GM12878 (cell line): ENCODE measurements at regions of chr2 and their contacts with region 1.

Region 1: GRCh38 chr2:7427293-7428060 is 510.3 kb downstream of the RNF144A start:
- DNase-seq: peak; percentile 66
- ATAC-seq: no peak; the same call in 2 of the 3 replicates
- H3K4me3 ChIP-seq: no peak overlapping the region
- H3K27ac ChIP-seq: no peak overlapping the region
- H3K4me1 ChIP-seq: peaks cover 7% of the 10 kb centered on the region; the same call in 1 of the 2 replicates
- H3K27me3 ChIP-seq: peaks cover 0 to 25% of the 10 kb centered on the region in 2 experiments; a peak in 3 of 4 replicates
- CTCF ChIP-seq: peak; percentile 44 to 70 (median 70); a peak in 5 of 6 replicates
- EP300 ChIP-seq: no peak
- POLR2A ChIP-seq: no peak
- RAD21 ChIP-seq: peak; percentile 88

Region 2: DNA sequence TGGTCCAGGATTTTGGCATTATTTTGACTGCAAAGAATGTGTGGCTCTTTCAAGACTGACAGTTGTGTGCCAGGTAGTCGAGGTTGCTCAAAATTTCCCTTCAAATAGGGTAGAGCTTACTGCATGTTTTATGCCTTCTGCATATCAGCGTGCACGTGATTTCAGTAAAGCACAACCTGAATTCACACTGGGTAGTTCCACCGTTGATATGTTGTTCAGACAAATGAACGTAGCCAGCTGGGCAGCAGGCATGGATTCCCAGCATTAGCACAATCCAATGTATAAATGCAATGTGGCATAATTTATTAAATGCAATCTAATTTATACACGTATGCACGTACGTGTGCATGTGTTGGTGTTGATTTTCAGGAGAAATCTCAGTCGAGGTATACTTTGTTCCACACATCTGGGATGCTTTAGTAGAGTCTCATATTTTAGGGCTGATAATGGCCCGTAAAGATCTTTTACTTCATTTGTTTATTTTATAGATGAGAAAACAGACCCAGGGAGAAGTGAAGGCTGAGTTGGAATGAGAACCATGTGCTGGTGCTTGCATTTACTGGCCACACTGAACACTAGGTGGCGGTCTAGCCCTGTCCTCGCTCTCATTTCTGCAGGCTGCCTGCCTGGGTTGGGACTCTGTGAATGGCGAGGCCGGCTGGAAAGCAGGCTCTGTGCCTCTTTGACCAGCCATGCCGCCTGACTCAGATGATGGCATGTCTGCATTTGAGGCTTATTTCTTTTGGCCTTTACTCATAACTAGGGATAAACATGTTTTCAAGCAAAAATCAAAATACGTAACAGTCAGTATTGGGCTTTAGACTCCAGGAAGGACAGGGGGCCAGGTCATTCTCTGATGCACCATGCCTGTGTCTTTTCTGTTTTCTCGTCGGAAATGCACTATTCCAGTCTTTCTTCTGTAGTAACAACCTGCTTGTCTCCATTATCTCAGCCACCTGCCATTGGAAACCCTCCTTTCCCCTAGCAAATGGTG is 389.8 kb before region 1 on chr2:
- CTCF ChIA-PET with region 1: no interaction called
- POLR2A ChIA-PET with region 1: no interaction called
- RAD21 ChIA-PET with region 1: no interaction called
- SMC1A ChIA-PET with region 1: no interaction called
- in situ Hi-C with region 1: no loop called
- intact Hi-C with region 1: no loop called
- DNase-seq: no peak
- ATAC-seq: peak; percentile 99
- H3K4me3 ChIP-seq: no peak overlapping the region
- H3K27ac ChIP-seq: no peak overlapping the region
- H3K4me1 ChIP-seq: no peaks in the 10 kb centered on the region
- H3K27me3 ChIP-seq: no peaks in the 10 kb centered on the region
- CTCF ChIP-seq: peak; percentile 78 to 81 (median 79)
- EP300 ChIP-seq: no peak
- POLR2A ChIP-seq: no peak
- RAD21 ChIP-seq: peak; percentile 64

Region 3: DNA sequence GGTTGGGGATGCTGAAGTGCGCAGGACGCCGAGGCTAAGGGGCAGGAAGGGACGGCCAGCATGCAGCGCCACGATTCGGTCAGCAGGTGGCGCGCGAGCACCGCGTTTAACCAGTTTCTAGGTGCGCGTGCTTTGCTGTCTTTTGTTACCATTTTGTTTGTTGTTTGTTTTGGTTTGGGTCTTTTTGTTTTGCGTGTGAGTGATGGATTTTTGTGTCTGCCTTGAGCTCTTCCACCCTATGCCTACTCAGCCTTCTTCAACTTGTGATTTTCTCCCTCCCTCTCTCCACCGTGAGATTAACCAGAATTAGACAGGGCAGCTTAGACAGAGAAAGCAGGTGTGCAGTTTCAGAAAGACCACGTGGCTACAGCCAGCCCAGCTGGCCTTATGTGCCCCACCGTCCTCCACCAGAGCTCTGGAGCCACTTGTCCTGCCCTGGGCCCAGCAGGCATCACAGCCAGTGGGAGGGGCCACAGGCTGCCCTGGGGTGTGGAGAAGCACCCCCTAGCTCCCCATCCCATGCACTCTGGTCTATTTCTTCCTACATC is 330.1 kb before region 1 on chr2:
- CTCF ChIA-PET with region 1: interaction called, 5 read pairs
- POLR2A ChIA-PET with region 1: no interaction called
- RAD21 ChIA-PET with region 1: interaction called, 6 read pairs
- SMC1A ChIA-PET with region 1: interaction called, 7 read pairs
- in situ Hi-C with region 1: no loop called
- intact Hi-C with region 1: loop called (anchors 2 kb)
- DNase-seq: peak; percentile 35
- ATAC-seq: peak; percentile 98
- H3K4me3 ChIP-seq: peak overlapping the region; percentile 48; the same call in 1 of the 2 replicates
- H3K27ac ChIP-seq: no peak overlapping the region
- H3K4me1 ChIP-seq: peaks cover 4% of the 10 kb centered on the region; the same call in 1 of the 2 replicates
- H3K27me3 ChIP-seq: no peaks in the 10 kb centered on the region
- CTCF ChIP-seq: peak; percentile 97 to 99 (median 98); a peak in 5 of 6 replicates
- EP300 ChIP-seq: no peak
- POLR2A ChIP-seq: no peak
- RAD21 ChIP-seq: peak; percentile 84

Region 4: DNA sequence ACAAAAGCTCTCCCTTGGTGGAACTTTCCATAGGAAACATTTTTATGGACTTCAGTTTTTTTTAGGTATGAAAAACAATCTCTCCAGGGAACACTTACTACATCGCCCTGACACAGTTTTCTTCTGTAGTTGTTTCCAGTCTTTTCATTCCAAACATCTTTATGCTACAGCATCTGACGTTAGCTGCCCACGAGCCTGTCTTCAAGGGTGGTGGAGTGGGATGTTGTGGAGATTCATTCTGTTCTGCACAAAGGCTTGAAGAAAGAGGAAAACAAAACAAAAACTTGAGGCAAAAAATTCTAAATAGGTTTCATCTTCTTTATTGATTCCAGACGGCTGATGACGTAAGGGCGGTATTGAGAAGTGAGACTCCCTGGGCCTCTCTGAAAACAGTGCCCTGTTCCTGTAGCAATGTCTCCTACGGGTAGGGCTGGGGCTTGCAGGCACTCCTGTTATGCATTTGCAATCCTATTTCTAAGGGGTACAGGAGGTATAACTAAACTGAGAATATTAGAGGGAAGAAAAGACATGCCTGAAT is 135.3 kb before region 1 on chr2:
- CTCF ChIA-PET with region 1: no interaction called
- POLR2A ChIA-PET with region 1: no interaction called
- RAD21 ChIA-PET with region 1: no interaction called
- SMC1A ChIA-PET with region 1: no interaction called
- in situ Hi-C with region 1: no loop called
- intact Hi-C with region 1: no loop called
- DNase-seq: no peak
- ATAC-seq: no peak
- H3K4me3 ChIP-seq: no peak overlapping the region
- H3K27ac ChIP-seq: no peak overlapping the region
- H3K4me1 ChIP-seq: no peaks in the 10 kb centered on the region
- H3K27me3 ChIP-seq: no peaks in the 10 kb centered on the region
- CTCF ChIP-seq: no peak
- EP300 ChIP-seq: no peak
- POLR2A ChIP-seq: no peak
- RAD21 ChIP-seq: no peak

Region 5: GRCh38 chr2:7517088-7517487 is 89.6 kb after region 1 on chr2:
- CTCF ChIA-PET with region 1: interaction called, 3 read pairs
- POLR2A ChIA-PET with region 1: no interaction called
- RAD21 ChIA-PET with region 1: interaction called, 3 read pairs
- SMC1A ChIA-PET with region 1: interaction called, 15 read pairs
- in situ Hi-C with region 1: no loop called
- intact Hi-C with region 1: no loop called
- DNase-seq: no peak
- ATAC-seq: peak; percentile 68
- H3K4me3 ChIP-seq: no peak overlapping the region
- H3K27ac ChIP-seq: no peak overlapping the region
- H3K4me1 ChIP-seq: peaks cover 17% of the 10 kb centered on the region
- H3K27me3 ChIP-seq: peaks cover 0 to 2% of the 10 kb centered on the region in 2 experiments; a peak in 1 of 4 replicates
- CTCF ChIP-seq: no peak
- EP300 ChIP-seq: no peak; a peak in 2 of 4 replicates
- POLR2A ChIP-seq: no peak
- RAD21 ChIP-seq: no peak

Region 6: DNA sequence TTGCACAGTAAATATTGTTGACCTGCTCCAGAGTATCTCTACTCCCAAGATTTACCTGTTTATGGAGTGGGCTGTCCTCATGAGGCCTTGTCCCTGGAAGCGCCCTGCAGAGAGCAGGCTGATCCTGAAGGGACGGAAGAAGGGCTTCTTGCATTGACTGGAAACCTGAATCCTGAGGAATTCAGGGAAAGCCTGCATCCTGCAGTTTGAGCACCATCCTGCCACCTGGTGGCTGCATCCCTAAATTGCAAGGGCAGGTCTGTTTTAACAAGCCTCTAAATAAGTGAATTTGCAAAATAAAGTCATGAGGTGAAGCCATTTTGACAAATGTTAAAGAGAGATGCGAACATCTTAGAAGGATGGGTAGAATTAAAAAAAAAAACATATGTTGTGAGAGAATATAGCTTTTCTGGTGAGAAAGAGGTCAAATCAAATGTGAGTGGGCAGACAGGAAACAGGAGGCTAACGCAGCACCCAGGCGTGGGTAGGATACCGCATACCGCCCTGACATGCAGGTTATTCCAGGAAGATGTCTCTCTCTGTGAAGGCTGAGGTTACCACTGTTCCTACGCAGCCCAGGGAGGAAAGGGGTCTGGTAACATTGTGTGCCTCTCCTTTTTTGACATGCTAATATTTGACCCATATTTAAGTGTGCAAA is 244.7 kb after region 1 on chr2:
- CTCF ChIA-PET with region 1: interaction called, 53 read pairs
- POLR2A ChIA-PET with region 1: no interaction called
- RAD21 ChIA-PET with region 1: interaction called, 25 read pairs
- SMC1A ChIA-PET with region 1: interaction called, 32 read pairs
- in situ Hi-C with region 1: no loop called
- intact Hi-C with region 1: loop called (anchors 2 kb)
- DNase-seq: peak; percentile 35
- ATAC-seq: no peak
- H3K4me3 ChIP-seq: no peak overlapping the region
- H3K27ac ChIP-seq: no peak overlapping the region
- H3K4me1 ChIP-seq: no peaks in the 10 kb centered on the region
- H3K27me3 ChIP-seq: no peaks in the 10 kb centered on the region
- CTCF ChIP-seq: peak; percentile 40 to 76 (median 70)
- EP300 ChIP-seq: no peak
- POLR2A ChIP-seq: no peak
- RAD21 ChIP-seq: peak; percentile 47

Region 7: GRCh38 chr2:7773362-7774360 is 346.2 kb after region 1 on chr2:
- CTCF ChIA-PET with region 1: interaction called, 9 read pairs
- POLR2A ChIA-PET with region 1: interaction called, 3 read pairs
- RAD21 ChIA-PET with region 1: interaction called, 3 read pairs
- SMC1A ChIA-PET with region 1: interaction called, 10 read pairs
- in situ Hi-C with region 1: no loop called
- intact Hi-C with region 1: loop called (anchors 2 kb)
- DNase-seq: peak; percentile 91
- ATAC-seq: peak; percentile 86
- H3K4me3 ChIP-seq: peak overlapping the region; percentile 45
- H3K27ac ChIP-seq: peak overlapping the region; percentile 48
- H3K4me1 ChIP-seq: peaks cover 19% of the 10 kb centered on the region
- H3K27me3 ChIP-seq: no peaks in the 10 kb centered on the region
- CTCF ChIP-seq: no peak
- EP300 ChIP-seq: peak; percentile 98 to 99
- POLR2A ChIP-seq: no peak
- RAD21 ChIP-seq: peak; percentile 21; the same call in 1 of the 2 replicates

Region 8: GRCh38 chr2:8303322-8303832 is 875.9 kb after region 1 on chr2:
- CTCF ChIA-PET with region 1: interaction called, 3 read pairs
- POLR2A ChIA-PET with region 1: interaction called, 3 read pairs
- RAD21 ChIA-PET with region 1: no interaction called
- SMC1A ChIA-PET with region 1: interaction called, 4 read pairs
- in situ Hi-C with region 1: no loop called
- intact Hi-C with region 1: loop called (anchors 2 kb)
- DNase-seq: peak; percentile 95
- ATAC-seq: peak; percentile 77
- H3K4me3 ChIP-seq: no peak overlapping the region
- H3K27ac ChIP-seq: peak overlapping the region; percentile 81
- H3K4me1 ChIP-seq: peaks cover 74% of the 10 kb centered on the region
- H3K27me3 ChIP-seq: no peaks in the 10 kb centered on the region
- CTCF ChIP-seq: peak in 1 of 3 experiments; percentile 4; a peak in 1 of 6 replicates
- EP300 ChIP-seq: peak; percentile 92 to 94
- POLR2A ChIP-seq: peak; percentile 27; the same call in 1 of the 2 replicates
- RAD21 ChIP-seq: peak; percentile 35; the same call in 1 of the 2 replicates

Region 9: GRCh38 chr2:8514796-8515758 is 1087.6 kb after region 1 on chr2:
- CTCF ChIA-PET with region 1: interaction called, 3 read pairs
- POLR2A ChIA-PET with region 1: no interaction called
- RAD21 ChIA-PET with region 1: interaction called, 3 read pairs
- SMC1A ChIA-PET with region 1: interaction called, 10 read pairs
- in situ Hi-C with region 1: no loop called
- intact Hi-C with region 1: loop called (anchors 10 kb)
- DNase-seq: peak; percentile 99
- ATAC-seq: peak; percentile 82
- H3K4me3 ChIP-seq: peak overlapping the region; percentile 51; the same call in 1 of the 2 replicates
- H3K27ac ChIP-seq: peak overlapping the region; percentile 93
- H3K4me1 ChIP-seq: peaks cover 46% of the 10 kb centered on the region
- H3K27me3 ChIP-seq: no peaks in the 10 kb centered on the region
- CTCF ChIP-seq: no peak
- EP300 ChIP-seq: peak; percentile 76 to 95; a peak in 3 of 4 replicates
- POLR2A ChIP-seq: no peak
- RAD21 ChIP-seq: peak; percentile 36; the same call in 1 of the 2 replicates